Heart left ventricle (tissue), 16 donors: ENCODE measurements at regions of chr22 and their contacts with region 1.

Region 1: GRCh38 chr22:42229455-42230149 is 40.9 kb downstream of the TCF20 start:
- DNase-seq: no peak
- ATAC-seq: peak; percentile 42 to 82 (median 61)
- H3K4me3 ChIP-seq: no peak overlapping the region
- H3K27ac ChIP-seq: no peak overlapping the region
- H3K4me1 ChIP-seq: peaks cover 5 to 38% (median 26%) of the 10 kb centered on the region in 12 donors
- H3K27me3 ChIP-seq: no peaks in the 10 kb centered on the region
- CTCF ChIP-seq: no peak
- POLR2A ChIP-seq: no peak

Region 2: DNA sequence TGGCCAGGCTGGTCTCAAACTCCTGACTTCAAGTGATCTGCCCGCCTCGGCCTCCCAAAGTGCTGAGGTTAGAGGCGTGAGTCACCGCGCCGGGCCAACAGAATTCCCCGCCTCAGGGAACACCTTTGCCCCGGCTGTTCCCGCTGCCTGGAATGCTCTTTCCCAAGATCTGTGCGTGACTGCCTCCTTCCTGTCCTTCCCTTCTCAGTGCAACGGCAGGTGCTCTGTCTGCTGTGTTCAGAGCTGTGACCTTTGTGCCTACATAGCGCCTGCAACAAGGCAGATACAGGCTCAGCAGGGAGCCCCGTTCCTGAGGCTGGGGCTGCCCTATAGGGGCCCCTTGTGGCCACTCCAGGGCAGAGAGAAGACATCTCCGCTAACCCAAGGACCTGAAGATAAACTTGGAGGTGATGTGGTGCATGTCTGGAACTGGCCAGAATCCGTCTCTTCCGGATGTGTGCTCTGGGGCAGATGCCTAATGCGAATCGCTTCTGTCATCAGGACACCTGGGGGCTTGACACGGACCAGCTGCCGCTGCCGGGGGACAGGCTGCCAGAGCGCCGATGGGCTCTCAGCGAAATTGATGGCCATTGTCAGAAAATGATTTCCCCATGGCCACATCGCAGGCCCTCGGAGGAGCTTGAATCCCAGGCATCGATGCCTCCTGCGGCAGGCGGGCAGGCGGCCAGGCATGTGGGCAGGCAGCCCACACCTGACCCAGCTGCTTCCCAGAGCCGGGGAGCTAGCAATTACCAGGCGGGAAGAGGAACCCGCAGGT is 84.4 kb after region 1 on chr22:
- intact Hi-C with region 1: loop called in 1 of 10 experiments (anchors 10 kb)
- DNase-seq: peak in 2 of 5 donors; percentile 50 to 56
- ATAC-seq: peak in 3 of 4 donors; percentile 31 to 66 (median 65)
- H3K4me3 ChIP-seq: no peak overlapping the region
- H3K27ac ChIP-seq: no peak overlapping the region
- H3K4me1 ChIP-seq: peaks cover 0 to 16% (median 4%) of the 10 kb centered on the region in 12 donors
- H3K27me3 ChIP-seq: peaks cover 0 to 11% (median 0%) of the 10 kb centered on the region in 9 donors
- CTCF ChIP-seq: peak in 10 of 12 donors; percentile 5 to 45 (median 26)
- POLR2A ChIP-seq: no peak